Transverse colon (tissue), 4 donors: ENCODE measurements at regions of chr11 and their contacts with region 1.

Region 1: GRCh38 chr11:60130496-60130895 is 42.0 kb downstream of the MS4A2 start:
- DNase-seq: peak; percentile 38
- H3K4me3 ChIP-seq: no peak overlapping the region
- H3K27ac ChIP-seq: no peak overlapping the region
- H3K4me1 ChIP-seq: peaks cover 0 to 29% (median 4%) of the 10 kb centered on the region in 4 donors
- H3K27me3 ChIP-seq: no peaks in the 10 kb centered on the region
- CTCF ChIP-seq: peak; percentile 22 to 67 (median 40)
- EP300 ChIP-seq: no peak
- POLR2A ChIP-seq: no peak

Region 2: GRCh38 chr11:59822989-59823566 is 307.4 kb before region 1 on chr11:
- in situ Hi-C with region 1: loop called in 3 of 4 experiments (anchors 5 to 25 kb)
- intact Hi-C with region 1: no loop called
- DNase-seq: peak; percentile 33
- H3K4me3 ChIP-seq: no peak overlapping the region
- H3K27ac ChIP-seq: no peak overlapping the region
- H3K4me1 ChIP-seq: peaks cover 0 to 9% (median 6%) of the 10 kb centered on the region in 4 donors
- H3K27me3 ChIP-seq: no peaks in the 10 kb centered on the region
- CTCF ChIP-seq: peak; percentile 47 to 81 (median 56)
- EP300 ChIP-seq: no peak
- POLR2A ChIP-seq: no peak

Region 3: DNA sequence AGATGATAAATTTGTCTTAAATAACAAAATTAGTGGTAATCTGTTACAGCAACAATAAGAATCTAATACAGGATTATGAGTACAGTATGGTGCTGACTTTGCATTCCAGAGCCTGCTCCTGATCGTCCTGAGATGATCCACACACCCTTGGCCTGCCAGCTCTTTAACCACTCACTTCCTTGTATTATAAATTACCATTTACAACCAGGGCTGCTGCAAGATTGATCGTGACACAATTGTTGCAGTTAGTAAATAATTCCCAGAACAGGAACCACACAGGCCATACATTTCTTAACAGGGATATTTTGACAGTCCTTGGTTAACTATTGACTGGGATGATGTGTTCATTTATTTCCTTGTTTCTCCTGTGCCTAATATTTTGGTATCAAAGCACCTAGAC is 281.4 kb before region 1 on chr11:
- in situ Hi-C with region 1: loop called in 1 of 4 experiments (anchors 25 kb)
- intact Hi-C with region 1: no loop called
- DNase-seq: peak; percentile 65
- H3K4me3 ChIP-seq: no peak overlapping the region
- H3K27ac ChIP-seq: peak overlapping the region; percentile 67 to 77 (median 74)
- H3K4me1 ChIP-seq: peaks cover 0 to 10% (median 7%) of the 10 kb centered on the region in 4 donors
- H3K27me3 ChIP-seq: no peaks in the 10 kb centered on the region
- CTCF ChIP-seq: no peak
- EP300 ChIP-seq: no peak
- POLR2A ChIP-seq: no peak